Activated CD4-positive, alpha-beta T cell treated with anti-CD3 and anti-CD28 coated beads for 36 hours (primary cell): ENCODE measurements at regions of chr17 and their contacts with region 1.

Region 1: GRCh38 chr17:60135151-60135950 is 14.4 kb upstream of the CA4 start:
- DNase-seq: peak; percentile 93
- ATAC-seq: peak; percentile 98
- H3K4me3 Mint-ChIP-seq: peak overlapping the region; percentile 90
- H3K27ac Mint-ChIP-seq: peak overlapping the region; percentile 91
- H3K4me1 Mint-ChIP-seq: peaks cover 26% of the 10 kb centered on the region
- H3K27me3 Mint-ChIP-seq: peaks cover 19% of the 10 kb centered on the region

Region 2: DNA sequence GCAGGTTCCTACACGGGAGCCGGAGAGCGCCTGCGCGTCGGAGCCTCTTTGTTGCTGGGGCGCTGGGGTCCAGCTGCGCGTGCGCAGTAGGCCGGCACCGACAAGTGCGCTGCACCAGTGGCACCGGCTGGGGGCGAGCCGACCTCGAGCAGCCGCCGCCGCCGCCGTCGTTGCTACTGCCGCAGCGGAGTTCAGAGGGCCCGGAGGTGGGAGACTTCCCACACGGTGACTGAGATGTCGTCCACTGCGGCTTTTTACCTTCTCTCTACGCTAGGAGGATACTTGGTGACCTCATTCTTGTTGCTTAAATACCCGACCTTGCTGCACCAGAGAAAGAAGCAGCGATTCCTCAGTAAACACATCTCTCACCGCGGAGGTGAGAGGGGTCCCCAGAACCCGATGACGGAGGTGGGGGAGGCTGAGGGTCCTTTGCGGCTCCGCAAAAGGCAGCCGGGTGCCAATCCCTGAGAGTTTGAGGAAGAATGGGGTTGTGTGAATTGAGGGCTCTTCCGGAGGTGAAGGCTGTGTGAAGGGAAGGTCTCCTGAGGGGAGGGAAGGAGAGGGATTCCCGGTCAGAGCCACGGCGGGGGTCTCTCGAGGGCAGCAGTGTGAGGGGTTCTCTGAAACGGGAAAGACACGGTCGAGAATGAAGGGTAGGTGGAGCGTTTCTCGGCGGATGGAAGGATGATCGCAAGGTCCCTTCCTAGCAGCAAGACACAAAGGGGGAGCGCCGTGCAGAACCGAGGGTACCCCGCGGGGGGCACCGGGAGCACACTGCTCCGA is 914.8 kb before region 1 on chr17 and contains the start of gene GDPD1:
- CTCF ChIA-PET with region 1: no interaction called
- POLR2A ChIA-PET with region 1: no interaction called
- intact Hi-C with region 1: loop called in 1 of 2 experiments (anchors 5 kb)
- DNase-seq: peak; percentile 99
- ATAC-seq: peak; percentile 99
- H3K4me3 Mint-ChIP-seq: peak within 1 kb of the TSS; percentile 93
- H3K27ac Mint-ChIP-seq: peak within 1 kb of the TSS; percentile 86
- H3K4me1 Mint-ChIP-seq: peaks cover 12% of the 10 kb centered on the region
- H3K27me3 Mint-ChIP-seq: no peaks in the 10 kb centered on the region
- total RNA-seq, gene GDPD1: 2.5 to 2.7 TPM

Region 3: GRCh38 chr17:60077672-60078519 is 57.5 kb before region 1 on chr17:
- CTCF ChIA-PET with region 1: no interaction called
- POLR2A ChIA-PET with region 1: no interaction called
- intact Hi-C with region 1: loop called (anchors 1 kb)
- DNase-seq: peak; percentile 81
- ATAC-seq: peak; percentile 73
- H3K4me3 Mint-ChIP-seq: peak overlapping the region; percentile 84
- H3K27ac Mint-ChIP-seq: peak overlapping the region; percentile 95
- H3K4me1 Mint-ChIP-seq: peaks cover 19% of the 10 kb centered on the region
- H3K27me3 Mint-ChIP-seq: no peaks in the 10 kb centered on the region

Region 4: DNA sequence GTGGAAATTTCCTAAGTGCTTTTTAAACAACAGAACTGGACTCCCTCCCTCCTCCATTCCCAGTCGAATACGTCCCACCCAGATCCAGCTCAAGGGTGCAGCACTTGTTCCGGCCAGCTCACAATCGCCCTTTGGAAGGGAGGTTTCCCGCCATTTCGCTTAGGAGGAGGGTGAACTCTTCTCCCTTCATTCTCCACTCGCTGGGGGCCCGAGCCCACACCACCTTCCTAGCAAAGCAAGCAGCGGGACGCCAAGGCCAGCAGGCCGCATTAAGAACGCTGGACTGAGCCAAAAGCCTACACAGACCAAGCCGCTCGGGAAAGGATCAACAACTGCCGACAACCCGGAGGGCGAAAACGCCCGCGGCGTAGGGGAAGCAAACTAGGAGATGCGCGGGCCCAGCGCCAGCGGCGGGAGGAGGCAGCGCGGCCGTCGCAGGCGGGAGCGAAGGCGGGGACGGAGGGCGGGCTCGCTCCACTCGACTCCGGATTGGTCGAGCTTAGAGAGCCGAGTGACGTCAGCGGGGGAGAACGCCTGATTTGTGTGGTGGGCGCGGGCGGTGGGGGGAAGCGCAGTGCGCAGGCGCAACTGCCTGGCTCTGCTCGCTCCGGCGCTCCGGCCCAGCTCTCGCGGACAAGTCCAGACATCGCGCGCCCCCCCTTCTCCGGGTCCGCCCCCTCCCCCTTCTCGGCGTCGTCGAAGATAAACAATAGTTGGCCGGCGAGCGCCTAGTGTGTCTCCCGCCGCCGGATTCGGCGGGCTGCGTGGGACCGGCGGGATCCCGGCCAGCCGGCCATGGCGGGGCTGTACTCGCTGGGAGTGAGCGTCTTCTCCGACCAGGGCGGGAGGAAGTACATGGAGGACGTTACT is 464.5 kb after region 1 on chr17 and contains the start of gene PPM1D:
- CTCF ChIA-PET with region 1: no interaction called
- POLR2A ChIA-PET with region 1: no interaction called
- intact Hi-C with region 1: loop called in 1 of 2 experiments (anchors 1 kb)
- DNase-seq: peak; percentile 99
- ATAC-seq: peak; percentile 94
- H3K4me3 Mint-ChIP-seq: peak within 1 kb of the TSS; percentile 95
- H3K27ac Mint-ChIP-seq: peak within 1 kb of the TSS; percentile 97
- H3K4me1 Mint-ChIP-seq: peaks cover 31% of the 10 kb centered on the region
- H3K27me3 Mint-ChIP-seq: no peaks in the 10 kb centered on the region
- total RNA-seq, gene PPM1D: 9.3 to 9.7 TPM

Region 5: GRCh38 chr17:60677308-60678124 is 542.2 kb after region 1 on chr17 and contains the start of gene BCAS3:
- CTCF ChIA-PET with region 1: no interaction called
- POLR2A ChIA-PET with region 1: no interaction called
- intact Hi-C with region 1: loop called in 1 of 2 experiments (anchors 1 kb)
- DNase-seq: peak; percentile 98
- ATAC-seq: peak; percentile 97
- H3K4me3 Mint-ChIP-seq: peak within 1 kb of the TSS; percentile 95
- H3K27ac Mint-ChIP-seq: peak within 1 kb of the TSS; percentile 84
- H3K4me1 Mint-ChIP-seq: peaks cover 16% of the 10 kb centered on the region
- H3K27me3 Mint-ChIP-seq: no peaks in the 10 kb centered on the region
- total RNA-seq, gene BCAS3: 7.2 to 7.5 TPM